Endothelial cell of umbilical vein (primary cell): ENCODE measurements at regions of chr21 and their contacts with region 1.

Region 1: GRCh38 chr21:37496972-37497371 is 130.4 kb downstream of the DYRK1A start:
- DNase-seq: peak; percentile 36
- H3K4me3 ChIP-seq: no peak overlapping the region
- H3K27ac ChIP-seq: no peak overlapping the region
- H3K4me1 ChIP-seq: no peaks in the 10 kb centered on the region
- H3K27me3 ChIP-seq: no peaks in the 10 kb centered on the region
- CTCF ChIP-seq: peak in 1 of 2 donors; percentile 6
- POLR2A ChIP-seq: no peak

Region 2: GRCh38 chr21:37172646-37173045 is 324.3 kb before region 1 on chr21:
- CTCF ChIA-PET with region 1: no interaction called
- POLR2A ChIA-PET with region 1: no interaction called
- dilution Hi-C with region 1: no loop called
- intact Hi-C with region 1: loop called (anchors 5 kb)
- DNase-seq: no peak
- H3K4me3 ChIP-seq: no peak overlapping the region
- H3K27ac ChIP-seq: no peak overlapping the region
- H3K4me1 ChIP-seq: no peaks in the 10 kb centered on the region
- H3K27me3 ChIP-seq: no peaks in the 10 kb centered on the region
- CTCF ChIP-seq: no peak
- POLR2A ChIP-seq: no peak